Ascending aorta (tissue), 2 donors: ENCODE measurements at regions of chr12 and their contacts with region 1.

Region 1: DNA sequence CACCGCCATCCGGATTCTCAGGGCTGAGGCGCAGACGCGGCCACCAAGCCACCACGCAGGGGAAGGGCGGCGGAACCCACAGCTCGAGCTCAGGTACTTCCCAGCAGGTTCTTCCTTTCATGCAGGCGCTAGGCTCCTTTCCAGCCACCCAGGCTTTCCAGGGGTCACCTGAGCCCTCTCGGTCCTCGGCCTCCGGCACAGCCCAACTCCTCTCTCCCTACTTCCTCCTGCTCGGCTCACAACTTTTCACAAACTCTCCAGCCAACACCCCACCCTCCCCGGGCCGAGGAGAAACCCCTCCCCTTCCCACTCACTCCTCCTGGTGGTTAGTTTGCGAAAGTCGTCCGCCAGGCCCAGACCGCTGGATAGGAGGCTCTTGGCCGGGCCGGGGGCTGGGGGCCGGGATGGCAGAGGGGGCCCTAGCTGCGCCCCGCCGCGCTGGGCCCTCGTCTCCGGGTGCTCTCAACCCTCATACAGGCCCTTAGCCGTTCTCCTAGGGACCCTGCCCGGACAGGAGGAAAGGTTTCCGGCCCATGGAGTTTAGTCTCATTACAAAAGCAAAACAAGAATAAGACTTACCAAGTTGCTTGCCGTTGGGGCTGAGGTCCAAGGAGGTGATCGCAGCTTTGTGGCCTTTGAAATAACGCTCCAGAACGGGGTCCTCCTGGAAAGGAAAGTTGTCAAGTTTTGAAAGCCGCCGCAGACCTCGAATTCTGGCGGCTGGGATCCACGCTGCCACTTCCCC is at the start of gene GALNT4:
- DNase-seq: peak; percentile 61 to 94
- H3K4me3 ChIP-seq: peak within 1 kb of the TSS; percentile 74 to 77
- H3K27ac ChIP-seq: peak within 1 kb of the TSS; percentile 92 to 93
- H3K4me1 ChIP-seq: peaks cover 2 to 20% of the 10 kb centered on the region in 2 donors
- H3K27me3 ChIP-seq: no peaks in the 10 kb centered on the region
- CTCF ChIP-seq: peak; percentile 61 to 78 (median 74)
- total RNA-seq, gene GALNT4: 3.3 TPM

Region 2: GRCh38 chr12:89019408-89020120 is 505.1 kb before region 1 on chr12:
- intact Hi-C with region 1: loop called (anchors 2 kb)
- DNase-seq: peak; percentile 11 to 91
- H3K4me3 ChIP-seq: peak overlapping the region in 1 of 2 donors; percentile 53
- H3K27ac ChIP-seq: no peak overlapping the region
- H3K4me1 ChIP-seq: peaks cover 0 to 4% of the 10 kb centered on the region in 2 donors
- H3K27me3 ChIP-seq: no peaks in the 10 kb centered on the region
- CTCF ChIP-seq: peak; percentile 64 to 84 (median 82)

Region 3: DNA sequence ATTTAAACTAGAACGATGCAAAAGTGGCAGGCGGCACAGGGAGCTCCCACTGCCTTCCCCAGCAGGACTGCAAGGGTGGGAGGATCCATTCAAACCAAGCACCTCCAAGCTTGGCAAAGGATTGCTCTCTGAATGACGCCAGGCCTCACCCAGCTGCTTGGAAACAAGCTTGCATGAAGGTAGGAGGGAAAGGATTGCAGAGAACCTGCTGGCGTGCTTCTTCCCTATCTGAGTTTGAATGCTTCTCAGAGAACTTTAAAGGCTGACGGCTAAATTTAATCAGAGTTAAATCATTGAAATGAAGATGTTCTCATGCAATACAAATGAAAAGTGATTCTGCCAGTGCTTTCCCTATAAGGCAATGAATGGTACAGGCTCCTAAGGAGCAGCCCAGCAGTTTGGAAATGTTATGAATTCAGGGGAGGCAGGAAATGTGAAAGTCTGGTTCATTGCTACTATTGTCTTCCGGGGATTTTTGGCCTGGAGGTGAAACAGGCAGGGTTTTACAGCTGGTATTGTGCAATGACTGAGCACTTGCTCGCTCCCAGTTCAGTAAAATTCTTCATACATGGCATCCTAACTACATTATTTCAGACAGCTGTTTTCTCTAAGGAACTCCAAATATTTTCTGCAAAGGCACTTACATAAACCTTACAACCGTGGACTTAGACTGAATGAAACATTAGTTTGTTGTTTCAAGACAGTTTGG is 140.5 kb before region 1 on chr12:
- intact Hi-C with region 1: loop called (anchors 10 kb)
- DNase-seq: peak in 1 of 2 donors; percentile 72
- H3K4me3 ChIP-seq: peak overlapping the region; percentile 1 to 41
- H3K27ac ChIP-seq: peak overlapping the region; percentile 68 to 78
- H3K4me1 ChIP-seq: peaks cover 3 to 15% of the 10 kb centered on the region in 2 donors
- H3K27me3 ChIP-seq: no peaks in the 10 kb centered on the region
- CTCF ChIP-seq: no peak

Region 4: DNA sequence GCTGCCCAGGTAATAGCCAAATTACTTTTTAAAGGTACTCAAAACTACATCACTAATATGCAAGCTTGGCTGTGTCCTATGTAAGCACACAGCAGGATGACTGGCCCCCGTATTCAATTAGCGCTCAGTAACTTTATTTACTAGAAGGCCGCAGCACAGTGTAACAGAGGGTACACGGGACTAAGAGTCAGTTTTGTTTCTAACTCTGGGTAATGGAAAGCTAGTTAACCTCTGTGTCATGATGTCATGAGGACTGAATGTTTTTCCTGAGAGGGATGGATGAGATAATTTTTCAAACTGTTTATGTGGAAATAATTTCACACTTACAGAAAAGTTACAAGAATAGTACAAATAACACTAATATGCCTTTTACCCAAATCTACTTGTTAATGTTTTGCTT is 27.2 kb before region 1 on chr12:
- intact Hi-C with region 1: loop called (anchors 2 kb)
- DNase-seq: no peak
- H3K4me3 ChIP-seq: no peak overlapping the region
- H3K27ac ChIP-seq: peak overlapping the region; percentile 22 to 37
- H3K4me1 ChIP-seq: no peaks in the 10 kb centered on the region
- H3K27me3 ChIP-seq: no peaks in the 10 kb centered on the region
- CTCF ChIP-seq: no peak